ENCODE measurements at regions of chr16 and their contacts with region 1.

Region 1: GRCh38 chr16:67883872-67884261 is 818 bp upstream of the NRN1L start:
- DNase-seq: peak; percentile 64
- H3K4me3 ChIP-seq: no peak overlapping the region
- H3K27ac ChIP-seq: no peak overlapping the region
- H3K4me1 ChIP-seq: no peaks in the 10 kb centered on the region
- H3K27me3 ChIP-seq: no peaks in the 10 kb centered on the region
- CTCF ChIP-seq: peak; percentile 92

Region 2: DNA sequence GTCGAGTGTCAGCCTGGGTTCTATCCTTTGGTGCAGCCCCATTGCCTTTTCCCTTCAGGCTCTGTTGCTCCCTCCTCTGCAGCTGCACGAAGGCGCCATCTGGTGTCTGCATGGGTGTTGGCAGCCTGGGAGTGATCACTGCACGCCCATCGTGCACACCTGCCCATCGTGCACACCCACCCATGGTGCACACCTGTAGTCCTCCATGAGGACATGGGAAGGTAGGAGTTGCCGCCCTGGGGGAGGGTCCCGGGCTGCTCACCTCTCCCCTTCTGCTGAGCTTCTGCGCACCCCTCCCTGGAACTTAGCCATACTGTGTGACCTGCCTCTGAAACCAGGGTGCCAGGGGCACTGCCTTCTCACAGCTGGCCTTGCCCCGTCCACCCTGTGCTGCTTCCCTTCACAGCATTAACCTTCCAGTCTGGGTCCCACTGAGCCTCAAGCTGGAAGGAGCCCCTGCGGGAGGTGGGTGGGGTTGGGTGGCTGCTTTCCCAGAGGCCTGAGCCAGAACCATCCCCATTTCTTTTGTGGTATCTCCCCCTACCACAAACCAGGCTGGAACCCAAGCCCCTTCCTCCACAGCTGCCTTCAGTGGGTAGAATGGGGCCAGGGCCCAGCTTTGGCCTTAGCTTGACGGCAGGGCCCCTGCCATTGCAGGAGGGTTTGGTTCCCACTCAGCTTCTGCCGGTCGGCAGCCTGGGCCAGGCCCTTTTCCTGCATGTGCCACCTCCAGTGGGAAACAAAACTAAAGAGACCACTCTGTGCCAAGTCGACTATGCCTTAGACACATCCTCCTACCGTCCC is 44.9 kb after region 1 on chr16:
- intact Hi-C with region 1: loop called (anchors 2 kb)
- DNase-seq: peak; percentile 84
- H3K4me3 ChIP-seq: no peak overlapping the region
- H3K27ac ChIP-seq: no peak overlapping the region
- H3K4me1 ChIP-seq: no peaks in the 10 kb centered on the region
- H3K27me3 ChIP-seq: no peaks in the 10 kb centered on the region
- CTCF ChIP-seq: peak; percentile 85